ENCODE measurements at regions of chr6 and their contacts with region 1.

Region 1: DNA sequence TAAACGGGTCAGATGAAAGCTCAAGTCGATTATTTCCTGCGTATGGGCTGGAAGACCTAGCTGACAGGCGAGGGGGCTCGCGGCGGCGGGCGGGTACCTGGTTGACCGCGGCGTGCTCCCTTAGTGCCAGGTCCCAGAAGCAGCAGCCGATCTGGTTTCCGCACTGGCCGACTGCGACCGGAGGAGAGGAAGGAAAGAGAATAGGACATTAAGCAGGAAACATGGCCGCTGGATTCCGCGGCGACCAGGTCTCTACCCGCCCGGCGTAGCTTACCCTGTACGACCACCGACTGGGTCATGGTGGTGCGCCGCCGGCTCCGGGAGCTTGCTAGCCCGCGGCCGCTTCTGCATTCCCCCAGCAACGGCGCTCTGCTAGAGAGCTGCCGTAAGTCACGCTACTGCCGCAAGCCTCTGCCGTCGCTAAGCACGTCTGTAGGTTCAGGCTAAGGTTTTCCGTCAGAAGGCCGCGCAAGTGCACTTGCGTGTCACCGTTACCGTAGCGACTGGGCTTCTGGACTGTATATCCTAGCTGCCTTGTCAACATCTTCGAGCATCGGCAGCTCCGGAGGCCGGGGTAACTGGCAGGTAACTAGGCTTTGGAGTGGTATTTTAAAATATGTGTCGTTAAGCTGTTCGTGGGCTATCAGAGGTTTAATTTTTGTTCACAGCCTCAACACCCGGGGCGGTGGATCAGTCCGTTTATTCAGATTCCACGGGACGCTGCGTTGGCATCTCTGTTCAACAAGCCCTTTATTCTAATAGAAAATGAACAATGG is at the starts of genes FAM229B and TUBE1:
- DNase-seq: peak; percentile 97
- H3K4me3 ChIP-seq: peak within 1 kb of the TSS; percentile 79 to 89 (median 82)
- H3K27ac ChIP-seq: peak within 1 kb of the TSS; percentile 84 to 91 (median 88)
- H3K4me1 ChIP-seq: peaks cover 8 to 22% (median 15%) of the 10 kb centered on the region in 4 donors
- H3K27me3 ChIP-seq: no peaks in the 10 kb centered on the region
- CTCF ChIP-seq: peak in 2 of 3 experiments; percentile 12 to 17
- EP300 ChIP-seq: no peak
- POLR2A ChIP-seq: peak; percentile 37
- total RNA-seq, gene FAM229B: 10.6 to 23.3 (median 14.1) TPM
- total RNA-seq, gene TUBE1: 15.6 to 35.3 (median 20.3) TPM

Region 2: DNA sequence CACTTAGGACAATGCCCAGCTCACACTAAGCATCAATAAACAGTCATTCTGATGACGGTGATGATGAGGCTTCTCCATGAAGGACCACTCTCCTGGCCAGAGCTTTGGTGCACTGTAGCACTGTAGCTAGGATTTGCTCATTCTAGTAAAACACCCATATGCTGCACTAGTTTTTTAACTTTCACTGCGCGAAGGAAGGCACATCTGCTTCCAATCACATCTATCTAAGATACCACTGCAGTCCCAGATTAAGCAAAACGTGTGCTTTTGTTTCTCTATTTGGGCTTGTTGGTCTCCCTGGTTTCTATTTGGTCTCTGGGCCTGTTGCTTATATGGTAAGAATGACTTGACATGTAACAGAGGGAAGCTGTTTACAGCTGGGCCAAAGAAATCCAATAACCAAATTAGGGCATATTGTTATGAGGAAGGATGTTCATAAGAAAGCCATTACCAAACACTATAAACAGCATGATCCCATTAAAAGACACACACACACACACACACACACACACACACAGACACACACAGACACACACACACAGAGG is 62.5 kb after region 1 on chr6:
- intact Hi-C with region 1: no loop called
- DNase-seq: no peak
- H3K4me3 ChIP-seq: no peak overlapping the region
- H3K27ac ChIP-seq: peak overlapping the region; percentile 49 to 78 (median 76)
- H3K4me1 ChIP-seq: peaks cover 0 to 44% (median 34%) of the 10 kb centered on the region in 4 donors
- H3K27me3 ChIP-seq: no peaks in the 10 kb centered on the region
- CTCF ChIP-seq: no peak
- EP300 ChIP-seq: no peak
- POLR2A ChIP-seq: no peak

Region 3: GRCh38 chr6:112188906-112189305 is 101.6 kb after region 1 on chr6:
- intact Hi-C with region 1: no loop called
- DNase-seq: no peak
- H3K4me3 ChIP-seq: no peak overlapping the region
- H3K27ac ChIP-seq: peak overlapping the region; percentile 64 to 71 (median 68)
- H3K4me1 ChIP-seq: peaks cover 21 to 92% (median 73%) of the 10 kb centered on the region in 4 donors
- H3K27me3 ChIP-seq: no peaks in the 10 kb centered on the region
- CTCF ChIP-seq: no peak
- EP300 ChIP-seq: no peak
- POLR2A ChIP-seq: no peak

Region 4: DNA sequence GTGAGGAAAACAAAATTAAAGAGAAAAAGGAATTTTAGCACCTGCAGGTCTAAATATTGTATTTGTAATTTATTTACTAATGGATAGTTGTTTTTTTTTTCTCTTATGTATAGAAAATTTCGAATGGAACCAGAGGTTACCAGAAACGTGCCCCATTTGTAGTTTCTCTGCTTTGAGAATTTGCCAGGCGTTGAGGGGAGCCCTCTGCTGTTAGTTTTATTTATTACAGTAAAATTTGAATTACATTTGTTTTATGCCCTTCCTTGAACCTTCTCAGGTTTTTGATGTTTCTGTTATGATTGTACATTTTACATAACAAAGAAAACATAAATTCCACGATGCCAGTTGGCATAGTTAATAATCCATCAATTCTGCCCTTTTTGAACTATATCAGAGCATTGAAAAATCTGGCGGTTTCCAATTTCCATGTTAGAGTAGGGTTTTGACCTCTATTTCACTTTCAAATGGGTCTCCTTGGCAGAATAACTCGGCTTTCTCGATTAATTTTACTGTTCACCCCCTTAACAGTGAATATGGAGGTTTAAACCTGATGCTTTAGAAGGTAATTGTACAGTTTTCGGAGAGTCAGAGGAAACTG is 224.7 kb after region 1 on chr6:
- intact Hi-C with region 1: loop called (anchors 10 kb)
- DNase-seq: no peak
- H3K4me3 ChIP-seq: no peak overlapping the region
- H3K27ac ChIP-seq: peak overlapping the region in 2 of 4 donors; percentile 24 to 28
- H3K4me1 ChIP-seq: peaks cover 2 to 38% (median 24%) of the 10 kb centered on the region in 4 donors
- H3K27me3 ChIP-seq: no peaks in the 10 kb centered on the region
- CTCF ChIP-seq: peak; percentile 71 to 79 (median 74)
- EP300 ChIP-seq: no peak
- POLR2A ChIP-seq: no peak

Region 5: GRCh38 chr6:112372226-112372806 is 285.0 kb after region 1 on chr6:
- intact Hi-C with region 1: loop called (anchors 10 kb)
- DNase-seq: no peak
- H3K4me3 ChIP-seq: no peak overlapping the region
- H3K27ac ChIP-seq: no peak overlapping the region
- H3K4me1 ChIP-seq: peaks cover 0 to under 1% (median under 1%) of the 10 kb centered on the region in 4 donors
- H3K27me3 ChIP-seq: peaks cover 0 to under 1% (median 0%) of the 10 kb centered on the region in 4 donors
- CTCF ChIP-seq: peak; percentile 43 to 64 (median 57)
- EP300 ChIP-seq: no peak
- POLR2A ChIP-seq: no peak

Measured in esophagus muscularis mucosa (tissue), 4 donors.